ENCODE measurements at regions of chr5 and their contacts with region 1.

Region 1: GRCh38 chr5:59810041-59810440 is 83.5 kb downstream of the PDE4D start:
- DNase-seq: peak; percentile 54 to 79 (median 71)
- ATAC-seq: peak; percentile 86
- H3K4me3 ChIP-seq: no peak overlapping the region
- H3K27ac ChIP-seq: no peak overlapping the region
- H3K4me1 ChIP-seq: no peaks in the 10 kb centered on the region
- H3K27me3 ChIP-seq: no peaks in the 10 kb centered on the region
- CTCF ChIP-seq: peak; percentile 63 to 87 (median 72)
- EP300 ChIP-seq: no peak
- POLR2A ChIP-seq: no peak
- RAD21 ChIP-seq: peak; percentile 58 to 71

Region 2: DNA sequence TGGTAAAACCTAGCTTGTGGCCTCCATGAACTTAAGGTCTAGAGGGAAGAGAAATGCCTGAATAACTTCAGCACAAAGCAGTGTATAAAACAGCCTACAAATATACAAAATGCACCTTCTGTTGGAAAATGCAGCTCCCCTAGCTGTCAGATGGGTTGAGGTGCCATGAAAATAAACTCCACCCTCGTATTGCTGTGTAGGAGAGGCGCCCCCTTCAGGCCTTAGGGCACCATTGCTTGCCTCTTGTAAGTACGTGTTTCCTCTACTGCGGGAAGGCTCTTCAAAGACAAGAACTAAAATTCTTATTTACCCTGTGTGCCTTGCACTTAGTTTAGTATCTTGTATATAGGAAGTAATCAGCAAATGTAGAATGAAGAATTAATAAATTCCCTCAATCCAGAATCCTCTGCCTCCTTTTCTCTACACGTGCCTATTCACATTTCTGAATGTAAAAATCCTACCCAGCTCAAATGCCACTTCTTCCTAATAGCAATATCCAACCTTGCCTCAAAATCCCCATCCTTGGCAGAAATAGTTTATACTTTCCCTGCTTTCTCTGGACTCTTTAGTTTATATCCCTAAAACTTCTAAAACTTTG is 477.2 kb after region 1 on chr5:
- CTCF ChIA-PET with region 1: interaction called, 4 read pairs
- POLR2A ChIA-PET with region 1: no interaction called
- in situ Hi-C with region 1: no loop called
- intact Hi-C with region 1: loop called (anchors 2 kb)
- DNase-seq: peak; percentile 28 to 66 (median 40)
- ATAC-seq: peak; percentile 83
- H3K4me3 ChIP-seq: no peak overlapping the region
- H3K27ac ChIP-seq: no peak overlapping the region
- H3K4me1 ChIP-seq: no peaks in the 10 kb centered on the region
- H3K27me3 ChIP-seq: no peaks in the 10 kb centered on the region
- CTCF ChIP-seq: peak; percentile 63 to 90 (median 66)
- EP300 ChIP-seq: no peak
- POLR2A ChIP-seq: no peak
- RAD21 ChIP-seq: peak in 1 of 2 experiments; percentile 43; a peak in 2 of 4 replicates

Region 3: GRCh38 chr5:60586307-60586901 is 776.4 kb after region 1 on chr5:
- CTCF ChIA-PET with region 1: interaction called, 5 read pairs
- POLR2A ChIA-PET with region 1: no interaction called
- in situ Hi-C with region 1: no loop called
- intact Hi-C with region 1: loop called (anchors 10 kb)
- DNase-seq: no peak
- ATAC-seq: no peak
- H3K4me3 ChIP-seq: no peak overlapping the region
- H3K27ac ChIP-seq: no peak overlapping the region
- H3K4me1 ChIP-seq: no peaks in the 10 kb centered on the region
- H3K27me3 ChIP-seq: no peaks in the 10 kb centered on the region
- CTCF ChIP-seq: no peak
- EP300 ChIP-seq: no peak
- POLR2A ChIP-seq: no peak
- RAD21 ChIP-seq: peak in 1 of 2 experiments; percentile 24; a peak in 1 of 4 replicates

Region 4: DNA sequence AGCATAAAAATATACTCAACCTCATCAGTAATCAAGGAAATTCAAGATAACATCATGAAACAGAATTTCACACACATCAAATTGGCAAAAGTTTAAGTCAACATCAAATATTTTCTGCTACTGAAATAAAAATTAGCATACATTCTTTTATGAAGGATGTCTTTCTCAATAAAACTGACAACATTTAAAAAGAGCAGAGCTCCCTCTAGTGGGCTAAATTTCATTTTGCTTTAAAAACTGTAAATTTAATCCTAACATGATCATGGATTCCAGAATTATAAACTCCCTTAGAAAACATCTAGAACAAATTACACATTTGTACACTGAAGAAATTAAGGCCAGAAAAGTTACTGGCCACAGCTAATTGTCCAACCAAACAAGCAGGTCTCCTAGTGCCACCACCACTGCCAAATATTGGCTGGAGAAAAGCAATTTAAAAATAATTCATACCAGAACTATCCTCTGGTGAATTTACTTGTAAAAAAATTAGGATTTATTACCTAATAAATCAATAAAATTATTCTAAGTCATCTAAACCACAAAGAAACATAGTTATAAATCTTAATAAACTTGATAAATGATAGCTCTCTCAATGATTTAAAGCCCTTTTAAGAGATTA is 858.8 kb after region 1 on chr5:
- CTCF ChIA-PET with region 1: interaction called, 3 read pairs
- POLR2A ChIA-PET with region 1: no interaction called
- in situ Hi-C with region 1: loop called (anchors 10 kb)
- intact Hi-C with region 1: loop called (anchors 2 kb)
- DNase-seq: peak in 1 of 4 experiments; percentile 42
- ATAC-seq: no peak
- H3K4me3 ChIP-seq: no peak overlapping the region
- H3K27ac ChIP-seq: no peak overlapping the region
- H3K4me1 ChIP-seq: peaks cover 5 to 10% of the 10 kb centered on the region in 2 experiments; a peak in 2 of 5 replicates
- H3K27me3 ChIP-seq: no peaks in the 10 kb centered on the region
- CTCF ChIP-seq: peak in 2 of 3 experiments; percentile 13 to 60; a peak in 4 of 6 replicates
- EP300 ChIP-seq: no peak
- POLR2A ChIP-seq: no peak
- RAD21 ChIP-seq: peak; percentile 23 to 27; a peak in 1 of 4 replicates

Region 5: DNA sequence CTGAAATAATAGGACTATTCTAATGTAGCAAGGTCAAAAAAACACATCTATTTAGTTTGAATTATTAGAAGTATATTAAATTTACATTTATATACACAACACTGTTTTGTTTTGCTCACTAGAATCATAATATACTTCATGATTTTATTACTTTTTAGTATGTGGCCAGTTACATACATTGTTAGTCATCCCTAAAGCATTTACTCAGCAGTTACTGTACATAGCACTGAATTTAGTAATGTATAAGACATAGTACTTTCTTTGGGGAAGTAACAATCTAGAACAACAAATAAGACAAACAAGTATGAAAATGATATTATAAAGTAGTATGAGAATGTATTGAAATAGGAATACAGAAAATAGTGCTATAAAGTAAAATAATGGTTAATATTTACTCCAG is 1106.6 kb after region 1 on chr5:
- CTCF ChIA-PET with region 1: no interaction called
- POLR2A ChIA-PET with region 1: no interaction called
- in situ Hi-C with region 1: loop called (anchors 25 kb)
- intact Hi-C with region 1: no loop called
- DNase-seq: no peak
- ATAC-seq: no peak
- H3K4me3 ChIP-seq: no peak overlapping the region
- H3K27ac ChIP-seq: no peak overlapping the region
- H3K4me1 ChIP-seq: no peaks in the 10 kb centered on the region
- H3K27me3 ChIP-seq: no peaks in the 10 kb centered on the region
- CTCF ChIP-seq: no peak
- EP300 ChIP-seq: no peak
- POLR2A ChIP-seq: no peak
- RAD21 ChIP-seq: no peak

Measured in K562 (cell line).